ENCODE measurements at regions of chr9 and their contacts with region 1.

Region 1: GRCh38 chr9:20209391-20210340 is 412.6 kb downstream of the MLLT3 start:
- DNase-seq: peak; percentile 79
- H3K4me3 Mint-ChIP-seq: no peak overlapping the region
- H3K27ac Mint-ChIP-seq: peak overlapping the region; percentile 89
- H3K4me1 Mint-ChIP-seq: peaks cover 33% of the 10 kb centered on the region
- H3K27me3 Mint-ChIP-seq: no peaks in the 10 kb centered on the region

Region 2: DNA sequence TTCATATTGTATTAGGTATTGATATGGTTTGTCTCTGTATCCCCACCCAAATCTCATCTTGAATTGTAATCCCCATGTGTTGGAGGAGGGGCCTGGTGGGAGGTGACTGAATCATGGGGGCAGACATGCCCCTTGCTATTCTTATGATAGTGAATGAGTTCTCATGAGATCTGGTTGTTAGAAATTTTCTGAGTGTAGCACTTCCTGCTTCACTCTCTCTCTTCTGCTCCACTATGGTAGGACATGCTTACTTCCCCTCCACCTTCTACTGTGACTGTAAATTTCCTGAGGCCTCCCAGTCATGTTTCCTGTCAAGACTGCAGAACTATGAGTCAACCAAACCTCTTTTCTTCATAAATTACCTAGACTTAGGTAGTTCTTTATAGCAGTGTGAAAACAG is 233.4 kb before region 1 on chr9:
- CTCF ChIA-PET with region 1: no interaction called
- POLR2A ChIA-PET with region 1: interaction called, 4 read pairs
- intact Hi-C with region 1: loop called (anchors 1 kb)
- DNase-seq: peak; percentile 45
- H3K4me3 Mint-ChIP-seq: no peak overlapping the region
- H3K27ac Mint-ChIP-seq: peak overlapping the region; percentile 74
- H3K4me1 Mint-ChIP-seq: peaks cover 23% of the 10 kb centered on the region
- H3K27me3 Mint-ChIP-seq: no peaks in the 10 kb centered on the region

Region 3: DNA sequence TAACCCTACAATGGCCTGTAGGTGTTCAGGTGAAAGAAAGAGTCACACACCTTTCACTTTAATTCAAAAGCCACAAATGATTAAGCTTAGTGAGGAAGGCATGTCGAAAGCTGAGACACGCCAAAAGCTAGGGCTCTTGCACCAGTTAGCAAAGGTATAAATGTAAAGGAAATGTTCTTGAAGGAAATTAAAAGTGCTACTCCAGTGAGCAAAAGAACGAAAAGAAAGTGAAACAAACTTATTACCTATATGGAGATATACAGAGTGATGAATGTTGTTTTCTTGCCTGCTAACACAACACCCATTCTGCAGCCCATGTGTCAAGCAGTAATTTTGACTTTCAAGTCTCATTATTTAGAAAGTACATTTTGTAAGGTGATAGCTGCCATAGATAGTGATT is 166.6 kb before region 1 on chr9:
- CTCF ChIA-PET with region 1: no interaction called
- POLR2A ChIA-PET with region 1: interaction called, 3 read pairs
- intact Hi-C with region 1: loop called (anchors 1 kb)
- DNase-seq: peak; percentile 23
- H3K4me3 Mint-ChIP-seq: peak overlapping the region; percentile 53
- H3K27ac Mint-ChIP-seq: peak overlapping the region; percentile 70
- H3K4me1 Mint-ChIP-seq: peaks cover 30% of the 10 kb centered on the region
- H3K27me3 Mint-ChIP-seq: no peaks in the 10 kb centered on the region

Region 4: DNA sequence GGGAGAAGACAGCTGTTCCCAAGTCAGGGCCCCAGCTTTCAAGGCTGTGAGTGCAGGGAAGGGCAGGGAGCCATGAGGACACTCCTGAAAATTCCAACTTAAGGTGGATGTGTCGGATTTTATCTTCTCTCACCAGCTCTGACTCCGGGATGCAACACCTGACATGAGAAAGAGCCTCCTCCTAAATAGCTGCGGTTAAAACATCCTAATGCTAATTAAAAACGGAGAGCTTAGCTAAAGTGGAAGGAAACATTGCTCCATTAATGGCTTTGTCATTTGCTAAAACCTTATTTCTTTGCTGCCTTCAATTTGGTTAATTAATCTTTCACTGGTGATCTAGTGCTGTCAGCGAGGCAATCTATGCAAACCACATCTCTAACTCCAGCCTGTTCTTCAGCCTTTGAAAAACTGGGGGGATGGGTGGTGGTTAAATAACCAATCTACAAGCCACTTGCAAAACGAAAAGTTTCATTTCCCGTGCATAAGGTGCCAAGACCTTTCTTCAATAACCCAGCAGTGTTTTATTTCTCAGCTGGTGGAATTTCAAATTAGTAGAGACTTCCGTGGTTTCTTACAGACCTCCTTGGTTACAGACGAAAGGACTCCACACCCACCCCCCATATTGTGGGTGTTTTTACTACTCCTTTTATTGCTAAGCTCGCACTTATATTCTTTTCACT is 33.0 kb after region 1 on chr9:
- CTCF ChIA-PET with region 1: interaction called, 3 read pairs
- POLR2A ChIA-PET with region 1: interaction called, 4 read pairs
- intact Hi-C with region 1: loop called (anchors 1 kb)
- DNase-seq: peak; percentile 30
- H3K4me3 Mint-ChIP-seq: peak overlapping the region; percentile 18
- H3K27ac Mint-ChIP-seq: no peak overlapping the region
- H3K4me1 Mint-ChIP-seq: peaks cover 46% of the 10 kb centered on the region
- H3K27me3 Mint-ChIP-seq: peaks cover 7% of the 10 kb centered on the region

Region 5: DNA sequence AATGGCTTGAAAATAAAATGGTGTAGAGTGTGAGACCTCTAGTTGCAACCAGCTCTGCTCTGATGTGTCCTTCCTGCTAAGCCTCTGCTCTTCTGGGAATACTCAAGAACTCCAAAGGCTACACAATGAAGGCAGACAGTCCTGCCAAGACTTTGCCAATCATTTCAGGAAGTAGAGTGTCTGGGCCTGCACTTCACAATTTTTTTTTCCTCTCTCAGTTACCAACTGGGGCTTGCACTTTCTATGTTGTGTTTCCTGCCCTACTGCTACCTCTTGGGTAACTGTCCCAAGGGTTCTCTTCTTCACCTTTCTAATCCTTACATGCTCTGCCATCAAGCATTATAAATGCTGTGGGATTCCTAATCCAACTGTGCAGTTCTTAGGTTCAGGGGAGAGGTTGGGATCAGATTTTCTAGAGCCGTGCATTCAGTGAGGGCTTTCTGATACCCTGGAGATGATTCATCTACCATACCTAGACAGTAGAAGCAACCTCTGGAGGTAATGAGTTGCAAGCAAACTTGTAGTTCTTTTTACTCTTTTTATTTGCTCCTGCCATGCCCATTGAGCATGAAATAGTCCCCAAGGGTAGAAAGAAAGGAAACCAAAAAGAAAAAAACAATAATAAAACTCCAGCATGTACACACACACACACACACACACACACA is 46.8 kb after region 1 on chr9:
- CTCF ChIA-PET with region 1: interaction called, 3 read pairs
- POLR2A ChIA-PET with region 1: interaction called, 4 read pairs
- intact Hi-C with region 1: loop called (anchors 1 kb)
- DNase-seq: no peak
- H3K4me3 Mint-ChIP-seq: no peak overlapping the region
- H3K27ac Mint-ChIP-seq: no peak overlapping the region
- H3K4me1 Mint-ChIP-seq: peaks cover 32% of the 10 kb centered on the region
- H3K27me3 Mint-ChIP-seq: no peaks in the 10 kb centered on the region

Region 6: GRCh38 chr9:20490246-20490834 is 280.7 kb after region 1 on chr9:
- CTCF ChIA-PET with region 1: no interaction called
- POLR2A ChIA-PET with region 1: no interaction called
- intact Hi-C with region 1: no loop called
- DNase-seq: no peak
- H3K4me3 Mint-ChIP-seq: no peak overlapping the region
- H3K27ac Mint-ChIP-seq: no peak overlapping the region
- H3K4me1 Mint-ChIP-seq: peaks cover 34% of the 10 kb centered on the region
- H3K27me3 Mint-ChIP-seq: no peaks in the 10 kb centered on the region